OCI-LY7 (cell line): ENCODE measurements at regions of chr10 and their contacts with region 1.

Region 1: GRCh38 chr10:28302638-28303488 is at the start of gene MPP7:
- DNase-seq: peak; percentile 98
- H3K4me3 ChIP-seq: peak within 1 kb of the TSS; percentile 73
- H3K27ac ChIP-seq: peak within 1 kb of the TSS; percentile 58
- H3K4me1 ChIP-seq: peaks cover 56% of the 10 kb centered on the region
- CTCF ChIP-seq: peak; percentile 55
- total RNA-seq, gene MPP7: 15.0 and 20.4 TPM in 2 replicates

Region 2: DNA sequence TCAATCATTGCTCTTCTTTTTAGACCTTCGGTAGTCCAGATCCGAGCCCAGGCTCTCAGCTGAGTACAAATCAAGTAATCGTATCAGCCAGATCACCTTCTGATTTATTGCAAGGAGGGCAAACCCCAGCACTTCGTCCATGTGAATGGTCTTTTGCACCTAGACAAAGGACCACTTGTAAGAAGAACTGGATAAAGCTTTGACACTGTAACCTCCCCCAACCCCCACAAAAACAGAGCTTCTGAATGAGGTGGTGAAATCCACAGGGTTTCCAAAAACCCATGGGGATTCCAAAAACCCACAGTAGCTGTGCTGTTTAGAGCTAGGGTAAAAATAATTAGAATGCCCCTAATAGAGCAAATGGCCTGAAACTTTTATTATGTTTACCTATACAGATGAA is 155.2 kb before region 1 on chr10:
- CTCF ChIA-PET with region 1: no interaction called
- POLR2A ChIA-PET with region 1: no interaction called
- intact Hi-C with region 1: no loop called
- DNase-seq: no peak
- H3K4me3 ChIP-seq: no peak overlapping the region
- H3K27ac ChIP-seq: no peak overlapping the region
- H3K4me1 ChIP-seq: no peaks in the 10 kb centered on the region
- CTCF ChIP-seq: no peak

Region 3: GRCh38 chr10:28179006-28179742 is 123.7 kb before region 1 on chr10:
- CTCF ChIA-PET with region 1: no interaction called
- POLR2A ChIA-PET with region 1: no interaction called
- intact Hi-C with region 1: loop called (anchors 5 kb)
- DNase-seq: peak; percentile 66
- H3K4me3 ChIP-seq: no peak overlapping the region
- H3K27ac ChIP-seq: no peak overlapping the region
- H3K4me1 ChIP-seq: peaks cover 36% of the 10 kb centered on the region
- CTCF ChIP-seq: peak; percentile 98

Region 4: DNA sequence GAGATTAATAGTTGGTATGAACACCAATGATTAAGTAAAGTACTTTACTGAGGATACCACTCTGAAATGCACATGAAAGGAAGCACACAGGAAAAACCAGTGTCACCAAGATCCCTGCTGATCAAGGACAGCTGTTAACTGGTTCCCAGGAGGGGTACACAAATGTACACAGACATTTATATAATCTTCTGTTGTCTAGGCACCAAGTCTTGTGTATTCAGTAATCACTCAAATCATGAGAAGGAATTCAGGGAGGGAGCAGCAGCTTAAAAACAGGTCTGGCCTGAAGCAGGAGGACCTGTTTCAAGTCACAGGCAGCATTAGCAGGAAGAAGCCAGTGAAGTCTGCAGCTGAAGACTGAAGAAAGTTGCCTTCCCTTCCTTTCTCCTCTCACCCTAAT is 18.7 kb before region 1 on chr10:
- CTCF ChIA-PET with region 1: interaction called, 6 read pairs
- POLR2A ChIA-PET with region 1: interaction called, 9 read pairs
- intact Hi-C with region 1: loop called (anchors 1 kb)
- DNase-seq: peak; percentile 45
- H3K4me3 ChIP-seq: peak overlapping the region; percentile 3
- H3K27ac ChIP-seq: peak overlapping the region; percentile 97
- H3K4me1 ChIP-seq: peaks cover 76% of the 10 kb centered on the region
- CTCF ChIP-seq: no peak

Region 5: DNA sequence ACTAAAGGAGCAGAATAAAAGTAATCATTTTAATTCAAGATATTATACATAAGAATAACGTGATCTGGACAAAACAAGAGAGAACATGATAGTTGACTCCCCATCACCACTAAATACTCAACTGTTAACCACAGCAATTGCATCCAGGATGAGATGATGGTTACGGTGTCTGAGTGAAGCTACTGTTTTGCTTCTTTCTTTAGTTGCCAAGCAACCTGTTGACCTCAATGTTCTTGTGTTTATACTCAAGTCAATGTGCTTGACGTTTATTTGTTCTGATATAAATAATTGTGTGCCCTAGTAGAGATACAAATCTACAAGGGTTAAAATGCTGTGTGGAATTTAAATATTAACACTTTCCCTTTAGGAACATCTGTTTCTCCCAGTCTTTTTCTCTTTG is 31.4 kb after region 1 on chr10:
- CTCF ChIA-PET with region 1: interaction called, 4 read pairs
- POLR2A ChIA-PET with region 1: interaction called, 9 read pairs
- intact Hi-C with region 1: loop called (anchors 2 kb)
- DNase-seq: peak; percentile 81
- H3K4me3 ChIP-seq: peak overlapping the region; percentile 70
- H3K27ac ChIP-seq: peak overlapping the region; percentile 89
- H3K4me1 ChIP-seq: peaks cover 75% of the 10 kb centered on the region
- CTCF ChIP-seq: no peak

Region 6: GRCh38 chr10:28381903-28382347 is 79.1 kb after region 1 on chr10:
- CTCF ChIA-PET with region 1: interaction called, 28 read pairs
- POLR2A ChIA-PET with region 1: interaction called, 35 read pairs
- intact Hi-C with region 1: loop called (anchors 1 kb)
- DNase-seq: peak; percentile 94
- H3K4me3 ChIP-seq: no peak overlapping the region
- H3K27ac ChIP-seq: no peak overlapping the region
- H3K4me1 ChIP-seq: peaks cover 8% of the 10 kb centered on the region
- CTCF ChIP-seq: peak; percentile 99

Region 7: GRCh38 chr10:28879875-28880682 is 577.2 kb after region 1 on chr10:
- CTCF ChIA-PET with region 1: no interaction called
- POLR2A ChIA-PET with region 1: no interaction called
- intact Hi-C with region 1: no loop called
- DNase-seq: no peak
- H3K4me3 ChIP-seq: no peak overlapping the region
- H3K27ac ChIP-seq: no peak overlapping the region
- H3K4me1 ChIP-seq: no peaks in the 10 kb centered on the region
- CTCF ChIP-seq: no peak

Region 8: DNA sequence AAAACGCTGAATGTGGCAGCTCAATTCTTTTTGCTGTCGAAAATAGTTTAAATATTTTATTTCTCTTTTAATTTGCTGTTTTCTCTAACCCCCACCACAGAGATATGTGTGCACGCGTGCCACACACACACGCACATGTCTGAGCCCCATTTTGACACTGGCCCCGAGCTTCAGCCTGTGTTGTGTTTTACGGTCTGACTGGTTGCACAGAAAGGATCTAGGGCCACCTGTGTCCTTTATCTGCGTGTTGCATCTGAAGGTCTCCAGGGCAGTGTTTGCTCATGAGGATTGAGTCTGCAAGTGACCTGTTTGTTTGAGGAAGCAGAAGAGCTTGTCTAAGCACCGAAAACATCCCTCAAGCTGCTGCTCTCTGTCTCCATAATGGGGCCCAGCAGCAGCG is 719.6 kb after region 1 on chr10:
- CTCF ChIA-PET with region 1: no interaction called
- POLR2A ChIA-PET with region 1: no interaction called
- intact Hi-C with region 1: no loop called
- DNase-seq: no peak
- H3K4me3 ChIP-seq: no peak overlapping the region
- H3K27ac ChIP-seq: no peak overlapping the region
- H3K4me1 ChIP-seq: no peaks in the 10 kb centered on the region
- CTCF ChIP-seq: no peak